BJ (cell line): ENCODE measurements at regions of chr11 and their contacts with region 1.

Region 1: GRCh38 chr11:44600839-44601383 is 35.4 kb downstream of the CD82 start:
- DNase-seq: no peak
- H3K4me3 ChIP-seq: no peak overlapping the region
- H3K27me3 ChIP-seq: no peaks in the 10 kb centered on the region
- CTCF ChIP-seq: no peak

Region 2: GRCh38 chr11:44556735-44557409 is 44.0 kb before region 1 on chr11:
- CTCF ChIA-PET with region 1: interaction called, 23 read pairs
- POLR2A ChIA-PET with region 1: no interaction called
- DNase-seq: no peak
- H3K4me3 ChIP-seq: no peak overlapping the region
- H3K27me3 ChIP-seq: no peaks in the 10 kb centered on the region; the same call in 1 of the 2 replicates
- CTCF ChIP-seq: peak; percentile 79

Region 3: DNA sequence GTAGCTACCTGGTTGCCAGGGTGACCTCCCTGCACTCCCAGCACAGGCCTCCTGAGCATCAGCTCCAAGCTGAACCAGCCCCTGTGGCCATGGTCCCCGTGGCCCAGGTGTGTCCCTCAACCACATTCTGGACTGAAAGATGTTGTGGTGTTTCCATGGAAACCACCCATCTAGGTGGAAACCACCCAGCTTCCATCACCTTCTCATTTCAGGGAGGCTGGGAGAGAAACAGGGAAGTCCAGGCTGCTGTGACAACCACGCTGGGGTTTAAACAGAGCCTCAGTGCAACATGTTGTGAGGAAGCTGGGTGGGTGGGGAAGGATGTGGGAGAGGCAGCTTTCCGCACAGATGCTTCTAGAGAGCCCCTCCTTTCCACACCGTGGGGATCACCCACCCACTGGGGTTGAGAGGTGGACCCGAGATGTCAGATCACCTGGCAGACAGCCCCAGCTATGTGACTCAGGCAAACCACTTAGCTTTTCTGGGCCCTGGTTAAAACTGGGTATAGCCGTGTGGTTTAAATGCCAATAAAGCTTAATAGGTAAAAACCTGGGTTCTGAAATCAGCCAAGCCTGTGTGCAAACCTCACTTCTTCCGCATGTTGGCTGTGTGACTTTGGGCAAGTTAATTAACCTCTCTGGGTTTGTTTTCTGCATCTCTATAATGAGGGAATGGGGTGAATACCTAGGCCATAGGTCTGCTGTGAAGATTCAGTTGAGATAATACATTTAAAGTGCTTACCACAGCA is 10.9 kb after region 1 on chr11:
- CTCF ChIA-PET with region 1: interaction called, 17 read pairs
- POLR2A ChIA-PET with region 1: no interaction called
- DNase-seq: no peak
- H3K4me3 ChIP-seq: no peak overlapping the region
- H3K27me3 ChIP-seq: no peaks in the 10 kb centered on the region
- CTCF ChIP-seq: no peak